A549 (cell line): ENCODE measurements at regions of chr1 and their contacts with region 1.

Region 1: GRCh38 chr1:24201941-24202440 is 14.9 kb upstream of the IFNLR1 start:
- DNase-seq: peak; percentile 62 to 91
- ATAC-seq: peak; percentile 85 to 94
- H3K4me3 ChIP-seq: no peak overlapping the region
- H3K27ac ChIP-seq: peak overlapping the region; percentile 84 to 86
- H3K4me1 ChIP-seq: peaks cover 22% of the 10 kb centered on the region
- CTCF ChIP-seq: peak; percentile 91
- EP300 ChIP-seq: no peak
- POLR2A ChIP-seq: no peak
- RAD21 ChIP-seq: peak; percentile 95 to 96

Region 2: GRCh38 chr1:24102961-24103360 is 99.0 kb before region 1 on chr1:
- CTCF ChIA-PET with region 1: no interaction called
- POLR2A ChIA-PET with region 1: no interaction called
- DNase-seq: peak in 1 of 2 experiments; percentile 23
- ATAC-seq: 0 out of 6 replicates have a peak, but pooled peaks of 1 of the 2 experiments have one; percentile 8
- H3K4me3 ChIP-seq: no peak overlapping the region
- H3K27ac ChIP-seq: no peak overlapping the region
- H3K4me1 ChIP-seq: peaks cover 20% of the 10 kb centered on the region
- CTCF ChIP-seq: no peak
- EP300 ChIP-seq: no peak
- POLR2A ChIP-seq: no peak
- RAD21 ChIP-seq: no peak

Region 3: GRCh38 chr1:24222008-24222842 is 20.2 kb after region 1 on chr1:
- CTCF ChIA-PET with region 1: interaction called, 14 read pairs
- POLR2A ChIA-PET with region 1: no interaction called
- DNase-seq: no peak
- ATAC-seq: no peak
- H3K4me3 ChIP-seq: no peak overlapping the region
- H3K27ac ChIP-seq: no peak overlapping the region
- H3K4me1 ChIP-seq: no peaks in the 10 kb centered on the region
- CTCF ChIP-seq: no peak
- EP300 ChIP-seq: no peak
- POLR2A ChIP-seq: no peak
- RAD21 ChIP-seq: no peak

Region 4: GRCh38 chr1:24277420-24278169 is 75.6 kb after region 1 on chr1:
- CTCF ChIA-PET with region 1: interaction called, 15 read pairs
- POLR2A ChIA-PET with region 1: no interaction called
- DNase-seq: no peak
- ATAC-seq: no peak; a peak in 1 of 6 replicates
- H3K4me3 ChIP-seq: no peak overlapping the region
- H3K27ac ChIP-seq: peak overlapping the region in 1 of 2 experiments; percentile 19; a peak in 1 of 6 replicates
- H3K4me1 ChIP-seq: peaks cover under 1% of the 10 kb centered on the region; the same call in 2 of the 3 replicates
- CTCF ChIP-seq: no peak
- EP300 ChIP-seq: no peak
- POLR2A ChIP-seq: no peak
- RAD21 ChIP-seq: no peak

Region 5: GRCh38 chr1:24308365-24309015 is 106.5 kb after region 1 on chr1:
- CTCF ChIA-PET with region 1: interaction called, 22 read pairs
- POLR2A ChIA-PET with region 1: no interaction called
- DNase-seq: peak in 1 of 2 experiments; percentile 53
- ATAC-seq: peak; percentile 56 to 85; a peak in 3 of 6 replicates
- H3K4me3 ChIP-seq: no peak overlapping the region
- H3K27ac ChIP-seq: peak overlapping the region; percentile 5 to 60; a peak in 4 of 6 replicates
- H3K4me1 ChIP-seq: peaks cover 5% of the 10 kb centered on the region; the same call in 2 of the 3 replicates
- CTCF ChIP-seq: no peak
- EP300 ChIP-seq: no peak
- POLR2A ChIP-seq: no peak
- RAD21 ChIP-seq: peak; percentile 33 to 42; a peak in 2 of 5 replicates

Region 6: DNA sequence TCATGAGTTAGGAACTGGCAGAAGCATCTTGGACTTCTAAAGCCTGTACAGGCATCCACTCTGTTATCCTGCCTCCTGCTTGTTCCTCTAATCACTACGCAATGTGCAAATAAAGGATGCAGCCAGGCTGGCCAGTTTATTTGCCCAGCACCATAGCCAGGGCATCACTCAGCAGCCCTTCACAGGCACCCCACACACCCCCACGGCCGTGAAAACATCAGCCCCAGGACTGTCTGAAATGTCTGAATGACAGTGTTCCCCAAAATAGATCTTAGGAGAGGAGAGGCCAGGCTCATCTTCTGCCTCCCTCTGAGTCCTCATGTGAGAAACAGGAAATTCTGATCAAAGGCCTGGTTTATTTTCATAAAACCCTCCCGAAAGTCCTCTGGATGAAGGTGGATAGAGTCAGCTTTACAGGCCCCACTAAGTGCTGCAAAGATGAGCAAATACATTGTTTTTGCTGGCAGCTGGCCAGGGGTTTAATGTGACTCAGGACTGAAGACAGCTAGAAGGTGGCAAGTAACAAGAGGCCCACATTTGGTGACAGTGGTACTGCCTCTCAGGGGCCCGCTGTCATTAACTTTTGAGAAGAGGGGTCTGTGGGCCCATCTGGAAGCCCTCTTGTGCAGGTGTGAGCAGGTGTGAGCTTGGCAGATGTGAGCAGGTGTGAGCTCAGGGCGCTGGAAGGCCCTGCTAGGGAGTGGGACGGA is 150.1 kb after region 1 on chr1:
- CTCF ChIA-PET with region 1: interaction called, 15 read pairs
- POLR2A ChIA-PET with region 1: no interaction called
- DNase-seq: peak in 1 of 2 experiments; percentile 32
- ATAC-seq: peak; percentile 62 to 64; a peak in 5 of 6 replicates
- H3K4me3 ChIP-seq: no peak overlapping the region
- H3K27ac ChIP-seq: peak overlapping the region; percentile 15 to 69; a peak in 4 of 6 replicates
- H3K4me1 ChIP-seq: peaks cover 14% of the 10 kb centered on the region
- CTCF ChIP-seq: no peak
- EP300 ChIP-seq: no peak
- POLR2A ChIP-seq: no peak
- RAD21 ChIP-seq: no peak

Region 7: GRCh38 chr1:24409535-24409934 is 207.5 kb after region 1 on chr1:
- CTCF ChIA-PET with region 1: interaction called, 11 read pairs
- POLR2A ChIA-PET with region 1: no interaction called
- DNase-seq: peak; percentile 32 to 60
- ATAC-seq: peak in 1 of 2 experiments; percentile 28; a peak in 2 of 6 replicates
- H3K4me3 ChIP-seq: no peak overlapping the region
- H3K27ac ChIP-seq: peak overlapping the region; percentile 29 to 57; a peak in 3 of 6 replicates
- H3K4me1 ChIP-seq: peaks cover 43% of the 10 kb centered on the region
- CTCF ChIP-seq: no peak
- EP300 ChIP-seq: no peak
- POLR2A ChIP-seq: no peak
- RAD21 ChIP-seq: no peak